ENCODE measurements at regions of chr6 and their contacts with region 1.

Region 1: GRCh38 chr6:25223490-25223991 is 55.6 kb upstream of the CARMIL1 start:
- DNase-seq: peak; percentile 80
- ATAC-seq: peak; percentile 66
- H3K4me3 Mint-ChIP-seq: peak overlapping the region; percentile 58
- H3K27ac Mint-ChIP-seq: no peak overlapping the region
- H3K4me1 Mint-ChIP-seq: peaks cover 9% of the 10 kb centered on the region
- H3K27me3 Mint-ChIP-seq: peaks cover 10% of the 10 kb centered on the region

Region 2: GRCh38 chr6:25244865-25245264 is 21.3 kb after region 1 on chr6:
- CTCF ChIA-PET with region 1: interaction called, 16 read pairs
- POLR2A ChIA-PET with region 1: no interaction called
- intact Hi-C with region 1: no loop called
- DNase-seq: no peak
- ATAC-seq: no peak
- H3K4me3 Mint-ChIP-seq: no peak overlapping the region
- H3K27ac Mint-ChIP-seq: no peak overlapping the region
- H3K4me1 Mint-ChIP-seq: peaks cover 9% of the 10 kb centered on the region
- H3K27me3 Mint-ChIP-seq: peaks cover 4% of the 10 kb centered on the region

Region 3: DNA sequence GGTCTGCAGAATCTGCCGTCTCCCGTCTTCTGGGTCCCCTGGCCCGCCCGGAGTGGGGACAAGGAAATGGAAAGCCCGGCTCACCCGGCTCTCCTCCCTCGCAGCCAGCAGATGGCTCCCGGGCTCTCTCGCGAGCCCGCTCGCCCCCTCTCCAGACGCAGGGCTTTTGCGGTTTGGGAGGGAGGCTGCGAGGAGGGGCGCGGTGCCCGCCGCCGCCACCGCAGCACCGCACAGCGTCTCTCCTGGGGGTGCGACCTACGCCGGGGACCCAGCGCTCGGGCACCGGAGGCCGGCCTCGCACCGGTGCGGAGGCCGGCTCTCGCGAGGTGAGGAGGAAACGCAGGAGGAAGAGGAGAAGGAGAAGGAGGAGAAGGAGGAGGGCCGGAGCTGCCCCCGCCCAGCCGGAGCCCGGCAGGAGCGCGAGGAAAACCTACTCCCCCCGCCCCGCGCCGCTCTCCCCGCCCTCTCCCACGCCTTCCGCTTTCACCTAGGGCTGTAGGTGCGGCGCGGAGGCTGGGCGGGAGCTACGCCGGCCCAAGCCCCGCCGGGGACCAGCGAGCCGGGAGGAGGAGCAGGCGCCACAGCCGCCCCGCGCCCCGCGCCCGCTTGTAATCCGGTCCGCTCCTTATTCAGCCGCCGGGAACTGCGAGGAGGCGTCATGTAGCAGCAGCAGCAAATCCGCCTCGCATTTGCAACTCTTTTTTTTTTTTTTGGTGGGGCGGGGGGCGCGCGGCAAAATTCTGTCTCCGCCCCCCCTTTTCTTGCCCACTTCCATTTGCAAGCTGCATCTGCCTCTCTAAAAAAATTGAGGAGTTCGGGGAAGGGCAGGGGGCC is 55.6 kb after region 1 on chr6 and contains the start of gene CARMIL1:
- CTCF ChIA-PET with region 1: interaction called, 13 read pairs
- POLR2A ChIA-PET with region 1: no interaction called
- intact Hi-C with region 1: no loop called
- DNase-seq: peak; percentile 82
- ATAC-seq: peak; percentile 75
- H3K4me3 Mint-ChIP-seq: peak within 1 kb of the TSS; percentile 82
- H3K27ac Mint-ChIP-seq: peak within 1 kb of the TSS; percentile 79
- H3K4me1 Mint-ChIP-seq: peaks cover 38% of the 10 kb centered on the region
- H3K27me3 Mint-ChIP-seq: peaks cover 5% of the 10 kb centered on the region
- total RNA-seq, gene CARMIL1: 4.5 to 4.9 TPM

Region 4: DNA sequence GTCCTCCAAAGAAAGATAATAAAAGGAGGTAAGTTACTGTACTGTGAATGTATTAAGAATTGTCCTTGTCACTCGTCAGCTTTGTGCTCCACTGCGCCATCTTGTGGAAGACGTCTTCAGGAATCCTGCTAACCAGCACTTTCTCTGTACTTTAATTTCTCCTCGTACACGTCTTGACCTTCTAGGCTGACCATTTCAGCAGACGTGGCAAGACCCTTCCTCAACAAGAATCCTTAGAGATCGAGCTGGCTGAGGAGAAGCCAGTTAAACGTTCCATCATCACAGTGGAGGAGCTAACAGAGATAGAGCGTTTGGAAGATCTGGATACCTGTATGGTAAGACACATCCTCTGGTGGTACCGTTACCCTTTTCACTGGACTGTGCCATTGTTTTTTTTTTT is 333.0 kb after region 1 on chr6:
- CTCF ChIA-PET with region 1: interaction called, 43 read pairs
- POLR2A ChIA-PET with region 1: no interaction called
- intact Hi-C with region 1: loop called (anchors 1 kb)
- DNase-seq: peak; percentile 90
- ATAC-seq: peak; percentile 66
- H3K4me3 Mint-ChIP-seq: no peak overlapping the region
- H3K27ac Mint-ChIP-seq: no peak overlapping the region
- H3K4me1 Mint-ChIP-seq: peaks cover 2% of the 10 kb centered on the region
- H3K27me3 Mint-ChIP-seq: no peaks in the 10 kb centered on the region

Region 5: DNA sequence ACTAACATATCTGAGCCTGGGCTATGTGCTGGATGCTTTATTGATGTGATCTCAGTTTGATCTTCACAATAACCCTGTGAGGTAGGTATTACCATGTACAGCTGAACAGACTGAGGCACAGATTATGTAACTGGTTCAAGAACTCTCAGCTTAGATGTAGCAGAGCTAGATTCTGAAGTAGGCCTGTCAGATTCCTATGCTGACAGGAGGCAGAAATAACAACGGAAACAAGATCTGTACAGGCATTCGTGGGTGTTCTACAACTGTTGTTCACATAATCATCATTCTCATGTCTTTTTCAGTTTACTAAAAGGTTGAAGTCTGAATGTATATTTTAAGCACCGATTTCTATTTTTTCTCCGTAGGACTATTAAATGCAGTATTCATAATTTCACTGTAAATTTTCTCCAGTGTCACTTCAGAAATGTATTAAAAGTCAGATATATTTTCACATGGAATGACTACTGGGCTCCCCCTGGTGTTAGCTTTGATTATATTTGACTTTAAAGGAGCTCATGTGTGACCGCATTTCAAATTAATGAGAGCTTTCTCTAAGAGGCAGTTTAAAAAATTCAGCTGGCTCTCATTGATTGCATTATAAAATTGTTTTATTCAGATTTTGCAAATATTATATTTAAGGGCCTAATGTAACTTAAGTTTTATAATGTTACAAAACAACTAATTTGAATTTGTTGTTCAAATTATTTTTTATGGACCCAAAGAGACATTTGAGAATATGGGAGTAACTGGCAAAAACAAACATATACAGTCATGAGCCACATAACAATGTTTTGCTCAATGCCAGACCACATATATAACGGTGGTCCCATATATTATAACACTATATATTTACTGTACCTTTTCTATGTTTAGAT is 494.6 kb after region 1 on chr6:
- CTCF ChIA-PET with region 1: interaction called, 7 read pairs
- POLR2A ChIA-PET with region 1: no interaction called
- intact Hi-C with region 1: loop called in 1 of 2 experiments (anchors 5 kb)
- DNase-seq: no peak
- ATAC-seq: no peak
- H3K4me3 Mint-ChIP-seq: no peak overlapping the region
- H3K27ac Mint-ChIP-seq: no peak overlapping the region
- H3K4me1 Mint-ChIP-seq: peaks cover 3% of the 10 kb centered on the region
- H3K27me3 Mint-ChIP-seq: peaks cover 13% of the 10 kb centered on the region